ENCODE measurements at regions of chr6 and their contacts with region 1.

Region 1: DNA sequence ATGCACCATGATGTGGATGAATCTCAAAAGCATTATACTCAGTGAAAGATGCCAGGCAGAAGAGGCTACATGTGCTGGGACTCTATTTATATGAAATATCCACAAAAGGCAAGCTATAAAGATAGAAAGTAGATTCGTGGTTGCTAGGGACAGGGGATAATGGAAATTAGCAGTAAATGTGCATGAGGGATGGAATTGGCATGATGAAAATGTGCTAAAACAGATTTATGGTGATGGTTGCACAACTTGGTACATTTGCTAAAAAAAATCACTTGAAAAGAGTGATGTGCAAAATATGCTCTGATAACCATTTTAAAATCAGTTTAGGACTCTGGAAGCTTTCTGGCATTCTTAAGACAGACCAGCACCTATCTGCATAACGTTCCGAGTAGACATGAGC is 61.6 kb downstream of the ALDH8A1 start:
- DNase-seq: no peak
- H3K4me3 ChIP-seq: no peak overlapping the region
- H3K27ac ChIP-seq: peak overlapping the region in 27 of 59 donors; percentile 5 to 71 (median 49)
- H3K27me3 ChIP-seq: no peaks in the 10 kb centered on the region
- CTCF ChIP-seq: no peak

Region 2: DNA sequence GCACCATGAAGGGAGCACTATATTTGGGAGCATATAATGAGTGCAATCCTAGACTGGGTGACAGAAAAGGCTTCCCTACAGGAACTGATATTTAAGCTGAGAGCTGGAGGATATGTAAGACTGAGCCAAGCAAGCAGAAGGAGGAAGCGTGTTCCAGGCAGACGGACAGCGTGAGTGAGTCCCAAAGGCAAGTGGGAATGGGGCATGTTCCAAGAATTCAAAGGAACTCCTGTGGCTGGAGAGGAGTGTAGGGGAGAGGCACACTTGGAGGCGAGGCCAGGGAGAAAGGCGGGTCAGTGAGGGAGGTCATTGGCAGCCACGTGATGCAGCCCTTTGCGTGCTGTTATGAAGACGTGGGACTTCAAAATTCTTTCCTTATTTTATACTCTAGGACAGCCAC is 542.5 kb before region 1 on chr6:
- intact Hi-C with region 1: no loop called
- DNase-seq: peak in 5 of 10 donors; percentile 10 to 56 (median 46)
- H3K4me3 ChIP-seq: no peak overlapping the region
- H3K27ac ChIP-seq: peak overlapping the region in 20 of 59 donors; percentile 0 to 91 (median 30)
- H3K27me3 ChIP-seq: no peaks in the 10 kb centered on the region
- CTCF ChIP-seq: no peak

Region 3: GRCh38 chr6:134938896-134939295 is 50.6 kb after region 1 on chr6:
- intact Hi-C with region 1: loop called in 1 of 2 experiments (anchors 5 kb)
- DNase-seq: no peak
- H3K4me3 ChIP-seq: no peak overlapping the region
- H3K27ac ChIP-seq: no peak overlapping the region
- H3K27me3 ChIP-seq: no peaks in the 10 kb centered on the region
- CTCF ChIP-seq: no peak